ENCODE measurements at regions of chr1 and their contacts with region 1.

Region 1: DNA sequence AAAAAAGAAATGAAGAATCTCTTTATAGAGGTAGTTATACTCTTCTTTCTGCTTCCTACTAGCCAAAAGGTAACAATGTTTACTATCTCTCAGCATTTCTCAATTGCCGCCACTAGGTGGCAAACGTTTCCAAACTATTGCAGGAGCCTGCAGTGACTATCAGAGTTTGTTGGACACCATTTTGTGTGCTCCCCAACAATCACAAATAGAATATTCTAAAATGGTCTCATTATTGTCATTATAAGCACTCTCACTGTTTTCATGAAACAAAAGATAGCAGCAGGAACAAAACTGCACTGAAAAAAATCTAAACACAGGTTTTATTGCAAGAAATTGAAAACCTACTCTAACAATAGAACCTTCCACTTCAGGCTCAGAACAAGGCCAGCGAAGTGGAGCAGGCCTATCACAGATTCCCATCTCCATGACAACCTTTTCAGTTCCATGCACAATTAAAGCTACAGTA is 83.9 kb upstream of the PLPPR4 start:
- DNase-seq: peak; percentile 88
- H3K4me3 Mint-ChIP-seq: no peak overlapping the region
- H3K27ac Mint-ChIP-seq: no peak overlapping the region
- H3K4me1 Mint-ChIP-seq: no peaks in the 10 kb centered on the region
- H3K27me3 Mint-ChIP-seq: peaks cover 4% of the 10 kb centered on the region

Region 2: DNA sequence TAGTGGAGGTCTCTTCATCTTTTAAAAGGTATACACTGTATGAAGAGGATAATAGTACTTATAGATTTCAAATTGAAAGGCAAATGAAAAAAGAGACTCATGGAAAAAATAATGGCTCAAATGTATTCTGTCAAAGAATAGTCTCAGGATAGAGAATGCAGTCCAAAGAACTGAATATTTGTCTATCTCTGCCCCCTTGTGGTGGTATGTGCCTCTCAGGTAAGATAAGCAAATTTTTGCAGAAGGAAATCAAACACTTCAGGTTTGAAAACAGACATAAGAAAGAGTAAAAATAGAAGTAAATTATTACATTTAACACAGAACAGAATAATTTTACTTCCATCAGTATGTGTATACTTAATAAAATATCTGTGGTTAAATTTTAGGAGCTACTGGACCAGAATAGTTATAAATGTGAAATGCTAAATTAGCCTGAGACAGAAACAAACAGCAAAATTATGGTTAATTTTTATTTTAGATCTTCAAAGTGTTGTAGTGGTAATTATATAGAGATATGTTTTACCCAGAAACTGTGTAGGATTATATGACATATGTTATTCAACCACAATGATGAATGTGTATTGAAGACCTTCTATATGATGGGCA is 301.1 kb after region 1 on chr1:
- intact Hi-C with region 1: loop called (anchors 1 kb)
- DNase-seq: peak; percentile 78
- H3K4me3 Mint-ChIP-seq: no peak overlapping the region
- H3K27ac Mint-ChIP-seq: no peak overlapping the region
- H3K4me1 Mint-ChIP-seq: no peaks in the 10 kb centered on the region
- H3K27me3 Mint-ChIP-seq: peaks cover 5% of the 10 kb centered on the region

Region 3: GRCh38 chr1:99685516-99686180 is 505.3 kb after region 1 on chr1:
- intact Hi-C with region 1: loop called (anchors 5 kb)
- DNase-seq: peak; percentile 77
- H3K4me3 Mint-ChIP-seq: no peak overlapping the region
- H3K27ac Mint-ChIP-seq: no peak overlapping the region
- H3K4me1 Mint-ChIP-seq: no peaks in the 10 kb centered on the region
- H3K27me3 Mint-ChIP-seq: peaks cover 8% of the 10 kb centered on the region

Region 4: DNA sequence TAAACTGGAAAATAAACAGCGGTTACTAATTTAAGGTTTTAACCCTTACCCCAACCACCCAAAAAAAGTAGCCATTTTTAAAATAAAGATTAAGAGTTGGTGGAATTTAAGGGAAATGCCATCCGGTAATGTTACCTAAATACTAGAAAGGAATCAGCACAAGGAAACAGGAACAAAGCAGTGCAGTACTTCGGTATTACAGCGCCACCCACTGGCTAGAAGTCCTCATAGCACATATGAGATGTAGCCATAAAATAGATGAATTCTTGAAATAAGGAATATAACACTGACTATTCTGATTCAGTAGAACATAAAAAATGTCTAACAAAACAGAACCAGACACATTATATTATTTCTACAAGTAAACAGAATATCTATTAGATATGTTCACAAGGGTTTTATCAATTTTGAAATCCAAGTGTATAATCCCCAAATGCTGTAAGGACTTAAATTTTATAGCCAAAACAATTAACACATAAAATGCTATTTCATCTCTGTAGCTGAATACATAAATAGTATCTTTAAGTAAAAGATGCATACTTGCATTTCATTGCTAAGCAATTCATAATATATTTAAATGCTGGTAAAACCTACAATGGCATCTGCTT is 527.3 kb after region 1 on chr1:
- intact Hi-C with region 1: loop called (anchors 1 kb)
- DNase-seq: peak; percentile 87
- H3K4me3 Mint-ChIP-seq: no peak overlapping the region
- H3K27ac Mint-ChIP-seq: no peak overlapping the region
- H3K4me1 Mint-ChIP-seq: peaks cover 7% of the 10 kb centered on the region
- H3K27me3 Mint-ChIP-seq: peaks cover 4% of the 10 kb centered on the region

Region 5: GRCh38 chr1:100866041-100866900 is 1685.9 kb after region 1 on chr1:
- intact Hi-C with region 1: loop called (anchors 5 kb)
- DNase-seq: no peak
- H3K4me3 Mint-ChIP-seq: no peak overlapping the region
- H3K27ac Mint-ChIP-seq: no peak overlapping the region
- H3K4me1 Mint-ChIP-seq: no peaks in the 10 kb centered on the region
- H3K27me3 Mint-ChIP-seq: peaks cover 2% of the 10 kb centered on the region